ENCODE measurements at regions of chr1 and their contacts with region 1.

Region 1: DNA sequence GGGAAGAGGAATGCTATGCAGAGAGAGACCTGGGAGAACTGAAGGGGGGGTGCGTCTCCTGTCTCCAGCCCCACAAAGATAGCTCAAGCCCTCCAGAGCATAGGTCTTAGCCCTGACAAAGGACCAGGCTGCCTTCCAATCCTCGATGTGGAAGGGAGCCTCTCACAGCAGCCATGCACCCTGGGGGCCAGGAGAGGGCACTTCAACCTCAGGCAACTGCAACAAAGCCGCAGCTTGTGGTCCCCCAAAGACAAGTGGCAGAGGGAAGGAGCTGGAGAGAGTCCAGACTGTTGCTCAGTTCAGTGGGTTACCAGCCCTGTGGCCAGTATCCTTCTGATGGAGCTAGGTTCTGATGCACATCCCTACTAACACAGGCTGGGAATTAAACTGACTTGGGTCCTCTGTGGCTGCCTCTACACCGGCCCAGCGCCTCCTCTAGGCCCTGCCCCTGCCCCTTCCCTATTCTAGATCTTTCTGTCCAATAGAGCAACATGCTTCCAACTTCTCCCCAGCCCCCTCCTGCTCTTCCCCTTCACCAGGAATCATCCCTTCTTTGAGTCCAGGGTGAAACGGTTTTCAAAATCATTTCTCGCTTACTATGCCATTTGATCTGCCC is 100.8 kb upstream of the SPATA6 start:
- DNase-seq: peak; percentile 77

Region 2: GRCh38 chr1:48644905-48645605 is 72.3 kb after region 1 on chr1:
- CTCF ChIA-PET with region 1: no interaction called
- POLR2A ChIA-PET with region 1: no interaction called
- DNase-seq: no peak

Region 3: GRCh38 chr1:48677306-48678287 is 104.8 kb after region 1 on chr1:
- CTCF ChIA-PET with region 1: interaction called, 12 read pairs
- POLR2A ChIA-PET with region 1: no interaction called
- DNase-seq: peak; percentile 55

Region 4: DNA sequence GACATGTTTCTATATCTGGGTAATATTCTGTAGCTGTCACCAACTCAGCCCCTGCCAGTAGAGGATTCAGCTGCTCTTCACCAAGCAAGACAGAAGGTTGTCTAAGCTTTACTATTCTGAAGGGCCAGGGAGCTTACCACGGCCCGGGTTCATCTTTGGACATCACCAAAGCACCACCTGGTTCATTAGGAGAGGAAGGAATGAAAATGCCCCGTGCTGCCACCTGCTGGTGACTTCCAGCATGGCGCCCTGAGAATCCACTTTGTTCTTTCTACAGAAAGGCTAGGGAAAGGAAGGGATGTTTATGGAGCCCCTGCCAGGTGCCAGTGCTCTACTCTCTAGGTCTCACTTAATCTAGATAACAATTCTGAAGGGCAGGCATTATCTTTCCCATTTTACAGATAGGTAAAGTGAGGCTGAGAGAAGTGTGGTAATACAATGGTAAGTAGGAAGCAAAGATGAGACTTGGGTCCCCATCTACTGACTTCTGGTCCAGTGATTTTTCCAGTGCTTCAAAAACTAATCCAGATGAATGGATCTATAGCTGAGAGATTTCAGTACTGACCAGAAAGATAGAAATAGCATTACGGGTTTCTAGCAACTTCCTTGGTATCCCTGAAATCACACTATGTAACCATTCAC is 124.4 kb after region 1 on chr1:
- CTCF ChIA-PET with region 1: interaction called, 17 read pairs
- POLR2A ChIA-PET with region 1: no interaction called
- DNase-seq: peak; percentile 65

Region 5: GRCh38 chr1:48725331-48726046 is 152.7 kb after region 1 on chr1:
- CTCF ChIA-PET with region 1: no interaction called
- POLR2A ChIA-PET with region 1: no interaction called
- DNase-seq: no peak

Region 6: DNA sequence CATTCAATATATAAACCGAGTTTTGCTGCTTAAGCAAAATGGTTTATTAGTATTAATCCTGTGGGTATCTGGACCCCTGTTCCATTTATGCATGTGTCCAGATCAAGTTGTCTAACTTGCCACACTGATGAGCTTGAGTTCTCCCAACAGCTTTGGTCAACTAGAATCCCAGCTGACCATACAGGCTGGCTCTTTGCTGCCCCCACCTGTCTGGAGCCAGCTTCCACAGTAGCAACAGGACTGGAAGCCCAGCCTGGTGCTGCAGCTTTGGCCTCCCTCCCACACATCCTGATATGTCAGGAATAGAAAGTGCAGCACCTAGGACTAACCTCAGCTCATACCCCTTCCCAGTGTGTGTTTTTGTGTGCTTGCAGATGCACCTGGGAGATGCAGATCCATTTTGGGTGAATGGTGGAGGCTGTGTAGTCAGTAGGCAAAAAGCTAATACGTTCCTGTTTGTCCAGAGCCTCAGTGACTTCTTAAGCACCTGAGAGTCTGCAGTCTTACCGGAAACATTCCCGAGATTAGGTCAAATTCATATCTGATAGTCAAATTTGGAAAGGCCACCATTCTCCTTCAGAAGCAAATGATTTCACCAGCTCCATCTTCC is 244.9 kb after region 1 on chr1:
- CTCF ChIA-PET with region 1: interaction called, 11 read pairs
- POLR2A ChIA-PET with region 1: interaction called, 3 read pairs
- DNase-seq: peak; percentile 62